ENCODE measurements at regions of chr7 and their contacts with region 1.

Region 1: DNA sequence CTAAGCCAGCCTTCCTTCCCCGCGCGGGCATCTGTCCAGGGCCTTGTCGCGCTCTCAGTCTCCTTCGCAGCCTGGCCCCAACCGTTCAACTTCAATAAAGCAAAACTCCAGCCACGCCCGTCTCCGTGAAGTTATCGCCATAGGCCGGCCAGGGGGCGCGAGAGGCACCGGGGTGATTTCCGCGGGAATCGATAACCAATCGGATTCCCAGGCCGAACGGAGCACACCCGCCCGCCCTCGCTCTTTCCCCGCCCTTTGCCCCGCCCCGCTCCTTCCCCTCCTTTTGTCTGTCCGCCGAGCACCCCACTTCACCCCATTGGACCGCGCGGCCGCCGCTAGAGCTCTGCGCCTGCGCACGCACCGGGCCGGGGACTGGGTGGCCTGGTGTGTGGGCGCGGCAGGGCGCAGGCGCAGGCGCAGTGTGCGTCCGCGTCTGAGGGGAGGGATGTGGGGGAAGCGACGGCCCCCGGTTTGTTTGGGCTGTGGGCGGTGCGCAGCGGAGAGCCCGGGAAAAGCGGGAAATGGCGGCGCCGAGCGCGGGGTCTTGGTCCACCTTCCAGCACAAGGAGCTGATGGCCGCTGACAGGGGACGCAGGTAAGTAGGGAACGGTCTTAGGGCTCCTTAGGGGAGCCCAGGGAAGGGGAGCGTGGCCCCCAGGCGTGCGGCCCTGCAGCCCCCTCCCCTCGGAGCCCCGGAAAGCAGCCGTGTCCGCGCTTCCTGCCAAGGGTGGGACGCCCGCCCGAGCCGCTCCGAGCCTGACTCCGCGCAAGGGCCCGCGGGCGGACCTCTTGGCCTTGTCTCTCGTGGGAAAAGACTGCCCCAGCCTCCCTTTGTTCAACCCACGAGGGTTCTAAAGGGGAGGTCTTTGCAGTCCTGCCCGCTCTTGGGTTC is at the start of gene CASP2:
- DNase-seq: peak; percentile 100
- H3K4me3 ChIP-seq: peak within 1 kb of the TSS; percentile 73 to 86
- H3K27ac ChIP-seq: peak within 1 kb of the TSS; percentile 69 to 89
- H3K4me1 ChIP-seq: peaks cover 15 to 26% of the 10 kb centered on the region in 2 experiments; a peak in 3 of 4 replicates
- H3K27me3 ChIP-seq: no peaks in the 10 kb centered on the region
- CTCF ChIP-seq: peak; percentile 47
- EP300 ChIP-seq: no peak
- RAD21 ChIP-seq: no peak
- polyA plus RNA-seq, gene CASP2: 19.7 and 22.3 TPM in 2 replicates

Region 2: DNA sequence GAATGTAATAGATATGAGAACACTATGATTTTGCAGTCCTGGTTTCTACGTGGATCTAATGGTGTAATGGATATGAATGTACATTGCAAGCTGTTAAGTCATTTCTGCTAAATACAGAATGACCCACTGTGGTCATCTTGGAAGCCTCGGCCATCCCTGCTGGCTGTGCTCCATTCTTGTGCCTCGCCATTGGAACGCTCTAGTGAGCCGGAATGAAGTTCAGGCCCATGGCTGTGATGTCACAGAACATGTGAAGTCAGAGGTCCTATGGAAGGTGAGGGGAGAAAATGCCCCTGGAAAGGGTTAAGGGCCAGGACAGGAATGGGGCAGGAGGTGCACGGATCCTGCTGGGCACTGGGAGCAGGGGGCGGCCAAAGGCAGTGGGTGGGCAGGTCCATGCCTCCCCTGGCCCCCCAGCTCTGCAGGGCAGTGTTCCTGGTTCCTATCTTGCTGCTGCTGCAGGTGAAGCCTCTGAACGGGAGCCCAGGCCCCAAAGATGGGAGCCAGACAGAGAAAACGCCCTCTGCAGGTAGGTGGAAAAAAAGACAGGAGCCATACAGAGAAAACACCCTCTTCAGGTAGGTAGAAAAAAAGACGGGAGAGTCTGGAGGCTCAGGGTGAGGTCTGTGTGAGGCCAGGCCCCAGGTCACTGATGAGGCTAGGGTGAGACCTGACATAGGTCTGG is 348.8 kb before region 1 on chr7 and contains the start of gene LLCFC1:
- CTCF ChIA-PET with region 1: no interaction called
- POLR2A ChIA-PET with region 1: no interaction called
- DNase-seq: peak; percentile 33
- H3K4me3 ChIP-seq: no peak within 1 kb of the TSS
- H3K27ac ChIP-seq: no peak within 1 kb of the TSS
- H3K4me1 ChIP-seq: peaks cover 0 to 10% of the 10 kb centered on the region in 2 experiments; a peak in 2 of 4 replicates
- H3K27me3 ChIP-seq: peaks cover 34% of the 10 kb centered on the region
- CTCF ChIP-seq: peak; percentile 33; the same call in 1 of the 2 replicates
- EP300 ChIP-seq: no peak
- RAD21 ChIP-seq: no peak
- polyA plus RNA-seq, gene LLCFC1: not detected in 2 replicates

Region 3: GRCh38 chr7:143299840-143300239 is 11.7 kb after region 1 on chr7:
- CTCF ChIA-PET with region 1: interaction called, 30 read pairs
- POLR2A ChIA-PET with region 1: interaction called, 4 read pairs
- DNase-seq: peak; percentile 72
- H3K4me3 ChIP-seq: no peak overlapping the region
- H3K27ac ChIP-seq: peak overlapping the region in 1 of 2 experiments; percentile 1; a peak in 1 of 4 replicates
- H3K4me1 ChIP-seq: peaks cover 0 to 26% of the 10 kb centered on the region in 2 experiments; a peak in 3 of 4 replicates
- H3K27me3 ChIP-seq: no peaks in the 10 kb centered on the region
- CTCF ChIP-seq: peak; percentile 69
- EP300 ChIP-seq: no peak
- RAD21 ChIP-seq: peak; percentile 51